Activated T-helper 1 cell treated with anti-CD3 and anti-CD28 coated beads, Interleukin-12 subunit alpha, Interleukin-12 subunit beta, Interleukin-2, Interleukin-4 antibody, amounts not matched to agents 30 ng/mL and 10 ng/mL and 1 ng/mL, durations not matched to agents 14 hours and 24 hours and 36 hours (primary cell): ENCODE measurements at regions of chr2 and their contacts with region 1.

Region 1: GRCh38 chr2:218898109-218898878 is 17.6 kb downstream of the WNT10A start:
- DNase-seq: peak; percentile 71
- H3K4me3 Mint-ChIP-seq: peak overlapping the region; percentile 73
- H3K27ac Mint-ChIP-seq: peak overlapping the region; percentile 86
- H3K4me1 Mint-ChIP-seq: peaks cover 42% of the 10 kb centered on the region
- H3K27me3 Mint-ChIP-seq: peaks cover 56% of the 10 kb centered on the region

Region 2: DNA sequence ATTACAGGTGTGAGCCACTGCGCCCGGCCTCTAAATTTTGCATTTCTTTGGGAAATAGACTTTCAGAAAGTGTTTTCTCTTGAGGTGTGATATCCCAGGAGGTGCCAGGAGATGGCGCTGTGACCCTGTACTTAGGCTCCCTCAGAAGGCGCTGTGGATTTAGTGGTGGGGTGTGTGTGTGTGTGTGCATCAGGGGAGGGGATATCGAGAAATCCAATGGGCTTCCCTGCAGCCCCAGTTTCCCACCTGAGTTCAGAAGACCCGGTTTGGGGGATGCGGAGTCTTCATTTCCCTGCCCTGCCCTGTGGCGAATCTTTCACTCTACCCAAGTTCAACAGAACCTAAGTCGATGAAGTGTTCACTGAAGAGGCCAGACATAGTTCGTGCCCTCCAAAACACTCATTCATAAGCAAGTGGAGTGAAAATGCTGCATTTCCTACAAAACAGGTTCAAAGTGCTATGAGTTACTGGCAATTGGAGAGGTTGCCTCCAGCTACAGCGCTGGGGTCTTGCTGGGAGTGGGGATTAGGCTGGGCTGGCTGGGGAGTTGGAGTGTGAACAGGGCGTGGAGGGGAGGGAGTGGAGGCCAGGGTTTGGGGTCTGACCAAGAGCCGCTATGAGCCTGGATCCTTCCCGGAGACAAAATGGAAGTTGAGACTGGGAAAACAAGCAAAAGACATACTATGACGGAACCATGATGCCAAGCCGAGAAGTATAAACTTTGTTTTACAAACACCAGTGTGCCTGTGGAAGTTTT is 45.2 kb before region 1 on chr2:
- intact Hi-C with region 1: loop called (anchors 1 kb)
- DNase-seq: peak; percentile 18
- H3K4me3 Mint-ChIP-seq: no peak overlapping the region
- H3K27ac Mint-ChIP-seq: no peak overlapping the region
- H3K4me1 Mint-ChIP-seq: no peaks in the 10 kb centered on the region
- H3K27me3 Mint-ChIP-seq: peaks cover 63% of the 10 kb centered on the region

Region 3: GRCh38 chr2:218876562-218877219 is 21.6 kb before region 1 on chr2:
- intact Hi-C with region 1: loop called (anchors 1 kb)
- DNase-seq: peak; percentile 48
- H3K4me3 Mint-ChIP-seq: no peak overlapping the region
- H3K27ac Mint-ChIP-seq: no peak overlapping the region
- H3K4me1 Mint-ChIP-seq: peaks cover 16% of the 10 kb centered on the region
- H3K27me3 Mint-ChIP-seq: peaks cover 73% of the 10 kb centered on the region

Region 4: GRCh38 chr2:218908721-218909619 is 10.7 kb after region 1 on chr2:
- intact Hi-C with region 1: loop called (anchors 1 kb)
- DNase-seq: peak; percentile 78
- H3K4me3 Mint-ChIP-seq: peak overlapping the region; percentile 79
- H3K27ac Mint-ChIP-seq: peak overlapping the region; percentile 78
- H3K4me1 Mint-ChIP-seq: peaks cover 18% of the 10 kb centered on the region
- H3K27me3 Mint-ChIP-seq: peaks cover 28% of the 10 kb centered on the region

Region 5: GRCh38 chr2:218962859-218963492 is 64.7 kb after region 1 on chr2:
- intact Hi-C with region 1: loop called (anchors 5 kb)
- DNase-seq: peak; percentile 33
- H3K4me3 Mint-ChIP-seq: no peak overlapping the region
- H3K27ac Mint-ChIP-seq: no peak overlapping the region
- H3K4me1 Mint-ChIP-seq: no peaks in the 10 kb centered on the region
- H3K27me3 Mint-ChIP-seq: peaks cover 48% of the 10 kb centered on the region

Region 6: GRCh38 chr2:219057709-219058540 is 159.6 kb after region 1 on chr2:
- intact Hi-C with region 1: no loop called
- DNase-seq: peak; percentile 68
- H3K4me3 Mint-ChIP-seq: peak overlapping the region; percentile 30
- H3K27ac Mint-ChIP-seq: no peak overlapping the region
- H3K4me1 Mint-ChIP-seq: no peaks in the 10 kb centered on the region
- H3K27me3 Mint-ChIP-seq: peaks cover 60% of the 10 kb centered on the region

Region 7: DNA sequence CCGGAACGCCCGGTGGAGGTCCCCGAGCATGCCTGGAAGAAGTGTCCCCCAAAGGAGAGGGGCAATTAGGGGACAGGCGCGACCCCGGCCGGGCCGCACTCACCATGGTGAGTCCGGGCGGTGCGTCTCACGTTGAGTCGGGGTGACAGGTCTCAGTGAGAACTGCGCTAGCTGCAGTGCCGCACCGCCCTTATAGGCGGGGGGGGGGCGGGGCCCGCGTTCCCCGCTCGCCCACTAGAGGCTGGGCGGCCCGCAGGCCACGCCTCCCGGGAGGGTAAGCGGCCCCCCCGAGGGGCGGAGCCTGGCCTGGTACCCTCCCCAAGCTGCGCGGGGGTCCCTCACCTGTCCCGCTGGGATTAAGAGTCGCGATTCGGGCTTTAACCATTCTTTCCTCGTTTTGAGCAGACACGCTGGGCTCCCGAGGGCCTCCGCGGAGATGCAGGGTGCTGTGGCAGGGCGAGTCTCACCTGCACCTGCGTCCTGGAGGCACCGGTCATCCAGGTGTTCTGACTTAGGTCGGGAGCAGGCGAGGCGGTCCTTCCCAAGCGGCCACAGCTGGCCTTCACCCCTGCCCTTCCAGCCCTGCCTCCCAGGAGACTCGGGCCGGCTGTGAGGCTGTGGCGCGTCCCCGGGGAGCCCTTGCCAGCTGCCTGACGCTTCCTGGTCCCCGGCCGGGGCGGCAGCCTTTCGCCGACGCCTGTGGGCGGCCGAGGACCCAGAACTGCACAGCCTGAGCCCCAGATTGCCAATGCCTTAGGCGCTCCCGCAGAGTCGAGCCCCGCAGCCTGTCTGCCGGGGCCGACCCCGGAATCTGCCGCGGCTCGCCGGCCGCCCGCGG is 355.7 kb after region 1 on chr2 and contains the start of gene TUBA4A:
- intact Hi-C with region 1: loop called (anchors 2 kb)
- DNase-seq: peak; percentile 87
- H3K4me3 Mint-ChIP-seq: peak within 1 kb of the TSS; percentile 93
- H3K27ac Mint-ChIP-seq: peak within 1 kb of the TSS; percentile 98
- H3K4me1 Mint-ChIP-seq: peaks cover 50% of the 10 kb centered on the region
- H3K27me3 Mint-ChIP-seq: no peaks in the 10 kb centered on the region
- total RNA-seq, gene TUBA4A: 211 and 217 TPM in 2 replicates